Dorsolateral prefrontal cortex (tissue), 120 donors: ENCODE measurements at regions of chr11 and their contacts with region 1.

Region 1: GRCh38 chr11:15038963-15039362 is 34.4 kb upstream of the CALCB start:
- DNase-seq: no peak
- H3K4me3 ChIP-seq: no peak overlapping the region
- H3K27ac ChIP-seq: no peak overlapping the region
- H3K27me3 ChIP-seq: peaks cover 0 to 22% (median 5%) of the 10 kb centered on the region in 45 donors
- CTCF ChIP-seq: peak in 1 of 56 donors; percentile 16

Region 2: DNA sequence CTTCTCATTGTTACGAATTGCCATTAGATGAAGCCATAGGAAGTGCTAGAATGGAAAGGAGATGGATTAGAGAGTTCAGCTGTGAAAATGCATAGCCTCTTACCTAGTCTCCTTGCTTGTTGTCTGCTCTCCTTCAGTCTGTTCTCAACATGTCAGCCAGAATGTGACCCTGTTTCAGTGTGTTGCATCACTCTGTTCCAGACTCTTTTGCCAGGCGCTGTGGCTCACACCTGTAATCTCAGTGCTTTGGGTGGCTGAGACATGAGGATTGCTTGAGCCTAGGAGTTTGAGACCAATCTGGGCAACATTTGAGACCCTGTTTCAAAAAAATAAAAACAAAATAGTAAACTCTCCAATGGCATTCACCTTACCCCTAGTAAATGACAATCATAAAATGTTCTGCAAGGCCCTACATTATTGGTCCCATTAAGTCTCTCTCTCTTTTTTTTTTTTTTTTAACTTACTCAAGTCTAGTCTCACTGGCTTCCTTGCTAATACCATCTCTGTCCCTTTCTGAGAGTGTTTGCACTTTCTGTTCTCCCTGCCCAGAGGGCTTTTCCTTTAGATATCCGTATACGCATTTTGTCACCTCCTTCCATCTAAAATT is 186.3 kb before region 1 on chr11:
- intact Hi-C with region 1: no loop called
- DNase-seq: no peak
- H3K4me3 ChIP-seq: no peak overlapping the region
- H3K27ac ChIP-seq: no peak overlapping the region
- H3K27me3 ChIP-seq: no peaks in the 10 kb centered on the region
- CTCF ChIP-seq: no peak

Region 3: DNA sequence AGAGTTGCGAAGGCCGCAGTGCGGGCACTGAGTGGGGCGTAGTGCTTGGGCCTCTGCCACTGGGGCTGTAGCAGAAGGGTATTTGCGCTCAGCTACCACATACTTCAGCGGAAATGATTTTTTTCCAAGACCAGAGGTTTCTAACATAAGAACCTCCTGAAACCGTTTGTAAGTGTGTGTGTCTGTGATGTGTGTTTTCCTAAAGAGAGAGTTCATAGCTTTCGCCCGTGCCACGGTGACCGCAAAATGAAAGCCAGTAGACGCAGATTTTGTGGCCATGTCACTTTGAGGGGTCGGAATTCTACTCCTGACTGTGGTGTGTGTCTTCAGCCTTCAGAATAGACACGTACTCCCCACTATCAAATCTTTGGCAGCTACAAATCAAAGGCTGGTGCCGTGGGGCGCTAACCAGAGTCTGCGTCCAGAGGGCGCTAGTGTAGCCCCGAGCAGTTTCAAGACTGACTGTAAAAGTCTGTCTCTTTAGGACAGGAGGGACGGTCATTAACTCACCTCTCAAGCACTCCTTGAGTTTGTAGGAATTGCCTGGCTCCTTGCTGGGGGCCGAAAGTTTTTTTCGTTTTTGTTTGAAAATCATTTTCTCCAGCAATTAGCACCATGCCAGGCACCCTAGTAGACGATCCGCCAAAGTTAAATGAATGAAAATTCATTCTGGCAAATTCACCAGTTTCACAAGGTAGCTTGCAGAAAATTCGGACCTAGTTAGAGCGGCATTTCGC is 64.3 kb before region 1 on chr11:
- intact Hi-C with region 1: loop called in 1 of 2 experiments (anchors 10 kb)
- DNase-seq: no peak
- H3K4me3 ChIP-seq: peak overlapping the region in 57 of 59 donors; percentile 6 to 67 (median 39)
- H3K27ac ChIP-seq: no peak overlapping the region
- H3K27me3 ChIP-seq: peaks cover 12 to 100% (median 88%) of the 10 kb centered on the region in 45 donors
- CTCF ChIP-seq: peak in 47 of 56 donors; percentile 8 to 57 (median 40)

Region 4: GRCh38 chr11:15169815-15170551 is 131.0 kb after region 1 on chr11:
- intact Hi-C with region 1: no loop called
- DNase-seq: no peak
- H3K4me3 ChIP-seq: no peak overlapping the region
- H3K27ac ChIP-seq: no peak overlapping the region
- H3K27me3 ChIP-seq: peaks cover 0 to 13% (median 0%) of the 10 kb centered on the region in 45 donors
- CTCF ChIP-seq: no peak

Region 5: DNA sequence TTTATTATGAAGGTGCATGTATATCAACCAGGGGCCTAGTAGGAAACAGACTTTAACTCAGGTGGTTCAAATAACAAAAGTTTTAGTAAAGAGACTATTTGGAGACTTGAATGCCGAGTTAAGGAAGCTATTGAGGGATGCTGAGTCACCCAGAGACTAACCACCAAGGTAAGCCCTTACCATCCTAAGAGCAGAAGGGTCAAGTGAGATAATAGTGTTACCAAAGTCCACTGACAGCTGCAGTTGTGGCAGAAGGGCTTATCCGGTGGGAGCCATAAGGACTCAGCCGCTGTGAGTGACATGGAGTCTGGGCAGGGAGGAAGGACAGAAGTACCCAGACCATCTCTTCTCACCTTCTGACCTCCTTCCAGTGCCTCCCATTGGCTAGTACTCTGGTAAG is 209.8 kb after region 1 on chr11:
- intact Hi-C with region 1: no loop called
- DNase-seq: no peak
- H3K4me3 ChIP-seq: no peak overlapping the region
- H3K27ac ChIP-seq: no peak overlapping the region
- H3K27me3 ChIP-seq: peaks cover 0 to 35% (median 2%) of the 10 kb centered on the region in 45 donors
- CTCF ChIP-seq: no peak